CD4-positive, alpha-beta memory T cell (primary cell): ENCODE measurements at regions of chr1 and their contacts with region 1.

Region 1: GRCh38 chr1:32964461-32965250 is at the start of gene RNF19B:
- DNase-seq: peak; percentile 92 to 95 (median 93)
- H3K4me3 ChIP-seq: peak within 1 kb of the TSS; percentile 76 to 79
- H3K4me3 Mint-ChIP-seq: peak within 1 kb of the TSS; percentile 87 to 94 (median 90)
- H3K27ac ChIP-seq: peak within 1 kb of the TSS; percentile 63
- H3K27ac Mint-ChIP-seq: peak within 1 kb of the TSS; percentile 90 to 97 (median 95)
- H3K4me1 ChIP-seq: peaks cover 38% of the 10 kb centered on the region
- H3K4me1 Mint-ChIP-seq: peaks cover 27 to 47% (median 33%) of the 10 kb centered on the region in 4 donors
- H3K27me3 ChIP-seq: no peaks in the 10 kb centered on the region
- H3K27me3 Mint-ChIP-seq: no peaks in the 10 kb centered on the region
- total RNA-seq, gene RNF19B: 28.5 to 30.6 TPM

Region 2: GRCh38 chr1:32817159-32817814 is 147.4 kb before region 1 on chr1 and contains the starts of genes S100PBP and YARS1:
- CTCF ChIA-PET with region 1: no interaction called
- POLR2A ChIA-PET with region 1: interaction called, 4 read pairs
- intact Hi-C with region 1: loop called (anchors 5 kb)
- DNase-seq: peak; percentile 99 to 100 (median 99)
- H3K4me3 ChIP-seq: peak within 1 kb of the TSS; percentile 67 to 70
- H3K4me3 Mint-ChIP-seq: peak within 1 kb of the TSS; percentile 94 to 100 (median 96)
- H3K27ac ChIP-seq: peak within 1 kb of the TSS; percentile 89
- H3K27ac Mint-ChIP-seq: peak within 1 kb of the TSS; percentile 82 to 97 (median 95)
- H3K4me1 ChIP-seq: peaks cover 60% of the 10 kb centered on the region
- H3K4me1 Mint-ChIP-seq: peaks cover 36 to 71% (median 51%) of the 10 kb centered on the region in 4 donors
- H3K27me3 ChIP-seq: no peaks in the 10 kb centered on the region
- H3K27me3 Mint-ChIP-seq: no peaks in the 10 kb centered on the region
- total RNA-seq, gene S100PBP: 63.2 to 65.5 TPM
- total RNA-seq, gene YARS1: 110 to 114 TPM

Region 3: DNA sequence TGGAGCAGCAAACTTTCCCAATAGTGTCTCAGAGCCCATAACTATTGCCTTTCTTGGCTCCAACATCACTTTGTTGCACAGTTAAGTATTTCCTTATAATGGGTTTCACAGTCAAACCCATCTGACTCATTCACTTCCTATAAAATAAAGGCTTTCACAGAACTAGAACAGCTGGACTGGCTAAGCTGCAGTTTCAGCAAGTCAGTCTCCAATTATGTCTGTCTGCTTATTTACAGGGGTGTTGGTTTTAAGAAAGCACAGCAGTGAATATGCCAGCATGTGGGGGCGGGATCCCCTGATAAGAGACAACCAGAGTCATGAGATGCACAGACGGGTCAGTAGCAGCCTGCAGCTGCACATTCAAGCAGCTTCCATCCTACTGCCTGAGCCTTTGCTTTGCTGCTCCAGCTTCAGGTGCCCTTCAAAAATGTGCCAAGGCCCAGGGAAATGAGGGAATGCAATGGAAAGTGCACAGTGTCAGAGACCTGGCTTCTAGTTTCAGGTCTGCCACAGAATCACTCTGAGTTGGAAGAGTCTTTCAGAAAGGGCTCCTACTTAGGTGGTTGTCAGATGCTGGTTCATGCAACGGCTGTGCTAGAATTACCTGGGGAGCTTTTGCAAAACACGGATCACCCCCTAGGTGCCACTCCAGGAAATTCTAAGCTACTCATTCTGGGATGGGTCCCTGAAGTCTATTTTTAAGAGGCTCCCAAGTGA is 24.8 kb before region 1 on chr1:
- CTCF ChIA-PET with region 1: interaction called, 6 read pairs
- POLR2A ChIA-PET with region 1: interaction called, 18 read pairs
- intact Hi-C with region 1: no loop called
- DNase-seq: no peak
- H3K4me3 ChIP-seq: no peak overlapping the region
- H3K4me3 Mint-ChIP-seq: no peak overlapping the region
- H3K27ac ChIP-seq: no peak overlapping the region
- H3K27ac Mint-ChIP-seq: peak overlapping the region in 6 of 7 donors; percentile 48 to 88 (median 71)
- H3K4me1 ChIP-seq: no peaks in the 10 kb centered on the region
- H3K4me1 Mint-ChIP-seq: peaks cover 4 to 17% (median 6%) of the 10 kb centered on the region in 4 donors
- H3K27me3 ChIP-seq: no peaks in the 10 kb centered on the region
- H3K27me3 Mint-ChIP-seq: no peaks in the 10 kb centered on the region

Region 4: DNA sequence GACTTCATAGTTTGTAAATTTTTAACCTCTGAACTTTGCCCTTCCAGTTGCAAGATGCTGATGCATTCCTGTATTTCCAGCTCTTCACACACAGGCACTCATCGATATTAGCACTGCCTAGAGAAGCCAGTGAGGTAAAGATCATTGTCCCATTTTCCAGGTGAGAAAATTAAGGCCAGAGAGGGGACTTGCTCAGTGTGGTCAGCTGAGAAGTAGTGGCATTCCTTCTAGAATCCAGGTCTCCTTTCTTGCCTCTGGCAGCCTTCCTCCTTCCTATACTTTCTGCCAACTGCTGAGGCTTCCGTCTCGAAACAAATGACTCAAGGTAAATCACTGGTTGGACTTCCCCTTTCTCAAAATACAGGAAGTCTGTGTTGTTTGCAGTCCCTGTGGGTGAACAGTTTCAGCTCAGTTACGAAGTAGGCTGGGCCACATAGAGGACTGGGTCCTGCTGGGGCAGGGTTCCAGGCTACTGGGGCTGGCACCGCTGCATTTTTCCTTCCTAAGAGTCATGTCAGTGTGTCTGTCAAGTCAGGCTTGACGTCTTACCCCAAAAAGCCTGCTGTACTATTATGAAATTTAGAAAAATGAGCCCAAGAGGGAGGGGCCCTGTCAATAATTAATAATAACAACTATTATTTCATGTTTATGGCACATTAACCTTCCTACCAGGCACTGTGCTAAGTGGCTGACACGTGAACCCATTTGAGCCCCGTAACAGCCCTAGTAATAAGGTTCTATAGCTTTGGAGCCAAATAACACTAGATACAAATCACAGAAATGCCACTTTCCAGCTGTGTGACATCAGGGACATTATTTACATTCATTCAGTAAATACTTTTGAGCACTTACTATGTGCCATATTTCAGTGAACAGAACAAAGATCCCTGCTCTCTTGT is 16.6 kb after region 1 on chr1:
- CTCF ChIA-PET with region 1: interaction called, 6 read pairs
- POLR2A ChIA-PET with region 1: interaction called, 205 read pairs
- intact Hi-C with region 1: loop called (anchors 1 kb)
- DNase-seq: peak; percentile 69 to 82 (median 73)
- H3K4me3 ChIP-seq: peak overlapping the region; percentile 12 to 46
- H3K4me3 Mint-ChIP-seq: peak overlapping the region; percentile 68 to 86 (median 83)
- H3K27ac ChIP-seq: peak overlapping the region; percentile 93
- H3K27ac Mint-ChIP-seq: peak overlapping the region; percentile 88 to 98 (median 96)
- H3K4me1 ChIP-seq: peaks cover 51% of the 10 kb centered on the region
- H3K4me1 Mint-ChIP-seq: peaks cover 26 to 52% (median 41%) of the 10 kb centered on the region in 4 donors
- H3K27me3 ChIP-seq: no peaks in the 10 kb centered on the region
- H3K27me3 Mint-ChIP-seq: no peaks in the 10 kb centered on the region

Region 5: DNA sequence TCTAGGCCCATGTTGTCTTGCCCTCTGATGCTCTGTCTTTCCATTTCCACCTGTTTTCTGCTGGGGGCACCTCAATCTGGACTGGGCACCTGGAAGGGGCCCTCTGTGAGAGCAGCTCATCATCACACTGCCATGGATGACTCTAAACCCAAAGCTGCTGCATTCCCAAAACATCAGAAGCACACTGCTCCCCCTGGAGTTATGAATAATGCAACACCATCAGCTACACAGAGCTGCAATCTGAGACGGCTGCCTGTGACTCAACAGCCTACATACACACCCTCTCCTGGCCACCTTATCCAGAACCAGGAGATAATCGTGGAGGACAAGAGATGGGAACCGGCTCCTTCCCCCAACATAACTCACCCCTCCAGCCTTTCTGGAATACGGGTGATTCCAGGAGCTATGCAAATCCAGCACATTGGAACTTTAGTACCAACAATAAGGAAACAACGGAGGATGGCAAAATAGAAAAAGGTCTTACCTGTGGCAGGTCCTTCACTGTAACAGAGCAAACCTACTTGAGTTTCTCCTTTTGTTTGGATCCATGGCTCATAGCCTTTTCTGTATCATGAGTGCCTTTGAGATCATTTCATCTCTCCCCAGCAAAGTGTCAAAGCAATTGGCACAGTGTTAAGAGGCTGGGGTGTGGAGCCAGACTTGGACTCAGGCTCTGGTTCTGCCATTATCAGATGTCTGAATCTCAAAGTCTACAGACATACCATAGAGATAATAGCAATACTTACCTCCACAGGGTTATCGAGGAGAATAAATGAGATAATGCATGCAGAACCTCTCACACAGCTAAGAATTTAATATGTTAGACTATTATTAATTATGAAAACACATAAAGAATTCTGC is 42.8 kb after region 1 on chr1:
- CTCF ChIA-PET with region 1: interaction called, 3 read pairs
- POLR2A ChIA-PET with region 1: interaction called, 13 read pairs
- intact Hi-C with region 1: no loop called
- DNase-seq: peak in 4 of 5 donors; percentile 12 to 33 (median 22)
- H3K4me3 ChIP-seq: no peak overlapping the region
- H3K4me3 Mint-ChIP-seq: no peak overlapping the region
- H3K27ac ChIP-seq: no peak overlapping the region
- H3K27ac Mint-ChIP-seq: peak overlapping the region in 2 of 7 donors; percentile 40 to 48
- H3K4me1 ChIP-seq: no peaks in the 10 kb centered on the region
- H3K4me1 Mint-ChIP-seq: peaks cover 0 to 10% (median under 1%) of the 10 kb centered on the region in 4 donors
- H3K27me3 ChIP-seq: no peaks in the 10 kb centered on the region
- H3K27me3 Mint-ChIP-seq: no peaks in the 10 kb centered on the region

Region 6: GRCh38 chr1:33080885-33081553 is 116.4 kb after region 1 on chr1 and contains the start of gene AZIN2:
- CTCF ChIA-PET with region 1: interaction called, 3 read pairs
- POLR2A ChIA-PET with region 1: interaction called, 14 read pairs
- intact Hi-C with region 1: loop called (anchors 1 kb)
- DNase-seq: peak; percentile 94 to 98 (median 96)
- H3K4me3 ChIP-seq: peak within 1 kb of the TSS; percentile 42 to 84
- H3K4me3 Mint-ChIP-seq: peak within 1 kb of the TSS; percentile 82 to 89 (median 86)
- H3K27ac ChIP-seq: peak within 1 kb of the TSS; percentile 58
- H3K27ac Mint-ChIP-seq: peak within 1 kb of the TSS; percentile 85 to 92 (median 90)
- H3K4me1 ChIP-seq: peaks cover 28% of the 10 kb centered on the region
- H3K4me1 Mint-ChIP-seq: peaks cover 11 to 44% (median 27%) of the 10 kb centered on the region in 4 donors
- H3K27me3 ChIP-seq: no peaks in the 10 kb centered on the region
- H3K27me3 Mint-ChIP-seq: no peaks in the 10 kb centered on the region
- total RNA-seq, gene AZIN2: 6.9 to 8.0 TPM

Region 7: DNA sequence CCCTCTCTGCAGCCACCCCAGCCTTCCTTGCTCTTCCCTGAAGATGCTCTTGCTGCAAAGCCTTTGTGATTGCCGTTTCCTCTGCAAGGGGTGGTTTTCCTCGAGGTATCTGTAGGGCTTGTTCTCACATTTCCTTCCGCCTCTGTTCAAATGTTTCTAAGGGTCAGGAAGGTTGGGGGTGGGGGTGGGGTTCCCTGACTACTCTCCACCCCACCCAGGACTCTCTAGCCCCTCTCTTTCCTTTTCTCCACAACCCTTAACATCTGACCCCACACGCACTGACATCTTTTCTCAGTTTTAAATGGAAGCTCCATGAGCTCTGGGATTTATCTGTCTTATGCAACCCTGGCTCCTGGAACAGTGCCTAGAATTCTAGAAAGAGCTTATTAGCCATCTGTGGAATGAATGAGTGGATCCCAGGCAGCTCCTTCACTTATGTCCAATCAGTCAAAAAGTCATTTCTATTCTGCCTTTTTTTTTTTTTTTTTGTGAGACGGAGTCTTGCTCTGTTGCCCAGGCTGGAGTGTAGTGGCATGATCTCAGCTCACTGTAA is 264.4 kb after region 1 on chr1:
- CTCF ChIA-PET with region 1: no interaction called
- POLR2A ChIA-PET with region 1: no interaction called
- intact Hi-C with region 1: no loop called
- DNase-seq: no peak
- H3K4me3 ChIP-seq: no peak overlapping the region
- H3K4me3 Mint-ChIP-seq: no peak overlapping the region
- H3K27ac ChIP-seq: no peak overlapping the region
- H3K27ac Mint-ChIP-seq: no peak overlapping the region
- H3K4me1 ChIP-seq: no peaks in the 10 kb centered on the region
- H3K4me1 Mint-ChIP-seq: peaks cover 0 to 1% (median 0%) of the 10 kb centered on the region in 4 donors
- H3K27me3 ChIP-seq: peaks cover 6% of the 10 kb centered on the region
- H3K27me3 Mint-ChIP-seq: peaks cover 19 to 28% of the 10 kb centered on the region in 2 donors